ENCODE measurements at regions of chr12 and their contacts with region 1.

Region 1: DNA sequence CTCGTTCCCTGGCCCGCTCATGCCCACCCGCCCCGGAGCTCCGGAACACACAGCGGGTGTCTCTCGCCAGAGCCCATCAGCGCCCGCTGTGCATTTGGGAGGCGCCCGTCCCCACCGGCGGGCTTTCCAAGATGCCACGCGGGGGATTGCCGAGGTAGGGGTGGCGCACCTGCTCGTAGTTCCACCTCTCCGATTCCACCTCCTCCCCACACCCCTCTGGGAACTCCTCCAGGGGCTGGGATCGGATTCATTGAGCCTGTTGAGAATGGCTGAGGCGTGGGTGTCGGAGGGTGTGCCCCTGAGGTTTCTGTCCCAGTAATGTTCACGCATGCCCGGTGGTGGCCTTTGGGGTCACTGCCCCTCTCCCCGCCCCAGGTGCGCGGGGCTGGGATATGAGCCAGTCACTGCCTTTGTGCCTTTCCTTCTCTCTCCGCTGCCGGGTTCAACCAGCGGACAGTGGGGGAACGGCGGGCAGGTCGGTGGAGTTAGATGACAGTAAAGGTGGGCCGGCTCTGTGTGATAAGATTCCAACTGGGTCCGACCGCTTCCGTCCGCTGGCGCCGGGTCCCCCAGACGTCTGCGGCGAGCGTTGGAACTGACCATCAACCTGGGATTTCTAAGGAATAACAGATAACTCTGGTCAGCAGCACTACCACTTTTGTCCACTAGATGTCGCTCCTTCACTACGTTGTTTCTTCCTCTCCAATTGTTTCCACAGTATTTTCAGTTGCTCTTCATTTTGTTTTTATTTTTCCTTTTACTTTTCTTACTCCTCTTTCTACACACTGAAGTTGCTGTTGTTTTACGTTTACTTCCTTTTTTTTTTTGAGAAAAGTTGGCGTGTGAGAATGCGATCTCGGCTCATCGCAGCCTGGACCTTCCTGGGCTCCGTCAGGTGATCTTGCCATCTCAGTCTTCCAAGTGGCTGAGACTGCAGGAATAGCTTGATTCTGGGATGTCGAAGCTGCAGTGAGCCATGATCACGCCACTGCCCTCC is 178.1 kb upstream of the ALG10B start:
- DNase-seq: peak; percentile 91
- ATAC-seq: peak; percentile 85
- H3K4me3 ChIP-seq: peak overlapping the region; percentile 51 to 72
- H3K27ac ChIP-seq: no peak overlapping the region; the same call in 1 of the 2 replicates
- H3K4me1 ChIP-seq: no peaks in the 10 kb centered on the region
- H3K27me3 ChIP-seq: no peaks in the 10 kb centered on the region
- CTCF ChIP-seq: peak; percentile 92

Region 2: DNA sequence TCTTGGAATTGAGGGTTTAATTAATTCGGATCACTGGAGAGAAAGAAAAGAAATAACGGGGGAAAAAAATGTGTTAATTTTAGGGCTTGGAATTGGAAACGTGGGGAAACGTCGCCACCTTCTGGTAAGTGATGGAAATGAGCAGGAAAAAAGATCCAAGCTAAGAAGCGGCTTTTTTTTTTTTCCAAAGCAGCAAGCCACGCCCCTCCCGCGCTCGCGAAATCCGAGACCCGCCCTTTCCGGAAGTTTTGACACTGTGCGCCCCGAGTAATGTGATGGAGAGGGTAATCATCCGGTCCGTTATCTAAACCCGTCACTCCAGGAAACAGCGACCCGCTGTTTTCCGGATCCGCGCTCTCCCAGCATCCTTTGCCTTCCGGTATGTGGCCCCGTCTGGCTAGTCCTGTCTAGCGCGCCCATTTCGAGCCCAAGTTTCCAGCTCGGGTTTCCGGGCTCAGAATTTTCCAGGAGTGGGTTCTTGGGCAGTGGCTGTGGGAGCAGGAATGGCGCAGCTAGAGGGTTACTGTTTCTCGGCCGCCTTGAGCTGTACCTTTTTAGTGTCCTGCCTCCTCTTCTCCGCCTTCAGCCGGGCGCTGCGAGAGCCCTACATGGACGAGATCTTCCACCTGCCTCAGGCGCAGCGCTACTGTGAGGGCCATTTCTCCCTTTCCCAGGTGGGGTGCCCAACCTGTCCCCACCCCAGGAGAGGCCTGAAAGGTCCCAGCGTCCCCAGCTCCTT is 178.0 kb after region 1 on chr12 and contains the start of gene ALG10B:
- CTCF ChIA-PET with region 1: interaction called, 4 read pairs
- POLR2A ChIA-PET with region 1: no interaction called
- in situ Hi-C with region 1: no loop called
- intact Hi-C with region 1: loop called (anchors 1 kb)
- DNase-seq: peak; percentile 88
- ATAC-seq: peak; percentile 100
- H3K4me3 ChIP-seq: peak within 1 kb of the TSS; percentile 67 to 77
- H3K27ac ChIP-seq: peak within 1 kb of the TSS; percentile 86
- H3K4me1 ChIP-seq: peaks cover 3% of the 10 kb centered on the region; the same call in 1 of the 2 replicates
- H3K27me3 ChIP-seq: no peaks in the 10 kb centered on the region
- CTCF ChIP-seq: peak; percentile 48
- total RNA-seq, gene ALG10B: 7.2 TPM

Measured in Panc1 (cell line).